ENCODE measurements at regions of chr2 and their contacts with region 1.

Region 1: DNA sequence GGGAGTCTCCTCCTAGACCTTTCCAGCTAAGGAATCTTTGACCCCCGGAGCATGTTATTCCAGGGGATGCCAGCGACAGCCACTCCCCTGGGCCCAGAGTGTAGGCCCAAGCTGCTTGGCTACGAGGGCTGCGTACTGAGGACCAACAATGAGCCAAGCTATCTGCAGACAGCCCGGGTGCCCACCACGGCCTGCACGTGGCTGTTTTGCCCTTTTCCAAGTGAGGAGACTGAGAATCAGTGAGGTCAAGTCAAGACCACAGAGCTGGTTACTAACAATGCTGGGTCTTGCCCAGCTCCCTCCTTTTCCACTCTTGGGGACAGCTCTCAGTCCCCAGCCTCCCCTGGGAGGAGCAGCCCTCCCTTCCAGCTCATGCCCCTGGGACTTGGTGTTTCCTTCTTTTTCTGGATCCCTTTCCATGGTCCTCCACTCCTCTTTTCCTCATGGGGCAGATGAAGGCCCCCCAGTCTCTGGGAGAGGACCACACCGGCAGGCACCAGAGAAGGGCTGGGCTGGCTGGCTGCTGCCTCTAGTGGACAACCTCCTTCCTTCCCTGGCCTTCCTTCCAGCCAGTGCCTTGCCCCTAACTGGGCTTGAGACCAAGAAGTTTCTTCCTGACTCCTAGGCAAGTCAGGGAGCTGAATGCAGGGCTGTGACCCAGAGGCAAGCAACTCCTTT is 550 bp upstream of the MALL start:
- DNase-seq: peak; percentile 56
- ATAC-seq: peak; percentile 87
- H3K4me3 Mint-ChIP-seq: peak overlapping the region; percentile 70
- H3K27ac Mint-ChIP-seq: no peak overlapping the region
- H3K4me1 Mint-ChIP-seq: peaks cover 13% of the 10 kb centered on the region
- H3K27me3 Mint-ChIP-seq: peaks cover 56% of the 10 kb centered on the region
- CTCF ChIP-seq: no peak

Region 2: GRCh38 chr2:110095994-110096633 is 20.1 kb before region 1 on chr2:
- CTCF ChIA-PET with region 1: interaction called, 10 read pairs
- POLR2A ChIA-PET with region 1: no interaction called
- DNase-seq: no peak
- ATAC-seq: no peak
- H3K4me3 Mint-ChIP-seq: no peak overlapping the region
- H3K27ac Mint-ChIP-seq: no peak overlapping the region
- H3K4me1 Mint-ChIP-seq: no peaks in the 10 kb centered on the region; the same call in 1 of the 2 replicates
- H3K27me3 Mint-ChIP-seq: no peaks in the 10 kb centered on the region
- CTCF ChIP-seq: no peak

Region 3: DNA sequence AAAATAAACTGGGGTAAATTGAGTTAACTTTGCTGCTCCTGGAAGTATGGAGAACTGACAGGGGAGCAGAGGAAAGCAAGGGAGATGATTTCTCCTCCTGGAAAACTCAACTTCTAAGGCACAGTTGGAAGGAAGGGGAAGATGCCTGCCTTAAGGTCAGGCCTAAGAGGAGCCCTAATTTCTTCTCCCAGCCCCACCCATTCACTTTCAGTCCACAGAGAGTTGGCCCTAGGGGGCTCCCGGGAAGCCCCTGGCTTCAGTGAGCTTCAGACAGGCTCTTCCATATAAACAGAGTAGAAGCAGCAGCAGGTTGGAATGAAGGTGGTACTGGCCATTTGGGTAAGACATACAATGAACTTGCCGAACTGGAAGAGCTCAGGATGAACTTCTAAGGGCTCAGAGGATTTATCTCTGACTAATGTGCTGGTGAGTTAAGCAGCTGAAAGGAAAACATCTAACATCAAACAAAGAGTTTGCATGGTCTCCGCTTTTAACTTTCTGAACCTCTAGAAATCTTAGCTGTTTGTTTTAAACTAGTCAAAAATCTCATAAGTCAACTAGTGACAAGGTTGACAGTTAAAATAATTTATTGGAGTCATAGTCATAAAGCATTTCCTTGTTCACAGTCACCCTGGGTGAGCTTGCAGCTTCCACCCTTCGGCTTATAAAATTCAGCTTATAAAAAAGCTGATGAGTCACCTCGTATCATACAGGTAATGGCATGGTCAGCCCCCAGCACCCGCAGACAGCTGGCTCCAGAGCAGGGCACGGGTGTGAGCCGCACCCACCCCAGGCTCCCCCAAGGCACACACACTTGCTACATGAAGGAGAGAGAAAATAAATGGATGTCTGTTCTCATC is 10.3 kb before region 1 on chr2:
- CTCF ChIA-PET with region 1: interaction called, 12 read pairs
- POLR2A ChIA-PET with region 1: no interaction called
- DNase-seq: no peak
- ATAC-seq: no peak
- H3K4me3 Mint-ChIP-seq: no peak overlapping the region
- H3K27ac Mint-ChIP-seq: no peak overlapping the region
- H3K4me1 Mint-ChIP-seq: peaks cover 3% of the 10 kb centered on the region
- H3K27me3 Mint-ChIP-seq: peaks cover 10% of the 10 kb centered on the region
- CTCF ChIP-seq: no peak

Region 4: GRCh38 chr2:110167326-110168000 is 51.3 kb after region 1 on chr2:
- CTCF ChIA-PET with region 1: interaction called, 17 read pairs
- POLR2A ChIA-PET with region 1: no interaction called
- DNase-seq: peak; percentile 21
- ATAC-seq: peak; percentile 92
- H3K4me3 Mint-ChIP-seq: no peak overlapping the region
- H3K27ac Mint-ChIP-seq: no peak overlapping the region; the same call in 1 of the 2 replicates
- H3K4me1 Mint-ChIP-seq: peaks cover 20% of the 10 kb centered on the region
- H3K27me3 Mint-ChIP-seq: no peaks in the 10 kb centered on the region
- CTCF ChIP-seq: no peak